ENCODE measurements at regions of chr3 and their contacts with region 1.

Region 1: DNA sequence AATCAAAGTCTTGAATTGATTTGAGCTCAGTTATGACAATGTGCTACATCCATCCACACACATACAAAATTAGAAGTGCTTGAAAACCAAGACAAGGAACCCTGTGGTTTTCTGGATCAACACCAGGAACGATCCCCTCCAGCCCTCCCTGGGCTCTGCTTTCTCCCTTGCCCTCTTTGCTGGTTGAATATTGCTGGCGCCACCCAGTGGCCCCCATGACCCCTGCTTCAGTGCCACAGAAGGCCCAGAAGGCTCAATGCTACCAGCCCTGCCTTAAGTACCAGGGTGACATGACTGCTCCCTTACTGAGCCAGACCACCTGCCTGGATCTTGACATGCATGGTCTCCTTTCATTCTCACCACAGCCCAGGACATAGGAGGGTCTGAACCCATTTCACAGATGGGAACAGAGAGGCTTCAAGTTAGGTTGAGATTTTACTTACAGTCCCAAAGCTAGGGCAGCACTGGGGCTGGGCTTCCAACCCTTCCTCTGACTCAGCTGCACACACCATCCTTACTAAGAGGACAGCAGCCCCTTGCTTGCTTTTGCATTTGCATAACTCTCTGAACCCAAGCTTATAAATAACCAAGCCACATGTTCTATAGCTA is 15.0 kb downstream of the IL12A start:
- DNase-seq: no peak
- H3K4me3 ChIP-seq: no peak overlapping the region
- H3K27ac ChIP-seq: no peak overlapping the region
- H3K27me3 ChIP-seq: no peaks in the 10 kb centered on the region
- CTCF ChIP-seq: peak; percentile 41

Region 2: DNA sequence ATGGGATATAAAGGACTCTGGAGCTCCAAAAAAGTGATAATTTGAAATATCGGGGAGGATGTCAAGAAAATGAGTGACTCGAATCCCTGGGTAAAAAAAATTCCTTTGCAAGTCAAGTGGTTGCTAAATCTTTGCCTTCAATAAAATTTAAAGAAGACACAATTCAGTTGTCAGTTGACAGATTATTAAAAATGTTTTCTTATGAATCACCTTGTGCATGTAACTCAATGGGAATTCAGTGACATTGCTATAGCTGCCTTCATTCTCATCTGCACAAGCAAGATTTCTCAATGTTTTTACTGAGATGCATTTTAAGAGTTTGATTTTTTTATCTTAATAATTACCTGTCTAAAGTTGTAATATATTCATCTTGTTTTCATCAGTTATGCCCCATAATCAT is 279.0 kb before region 1 on chr3:
- CTCF ChIA-PET with region 1: no interaction called
- POLR2A ChIA-PET with region 1: no interaction called
- DNase-seq: no peak
- H3K4me3 ChIP-seq: no peak overlapping the region
- H3K27ac ChIP-seq: no peak overlapping the region
- H3K27me3 ChIP-seq: no peaks in the 10 kb centered on the region
- CTCF ChIP-seq: no peak

Region 3: GRCh38 chr3:159804726-159805410 is 198.8 kb before region 1 on chr3:
- CTCF ChIA-PET with region 1: interaction called, 22 read pairs
- POLR2A ChIA-PET with region 1: no interaction called
- DNase-seq: peak; percentile 74
- H3K4me3 ChIP-seq: no peak overlapping the region
- H3K27ac ChIP-seq: no peak overlapping the region
- H3K27me3 ChIP-seq: no peaks in the 10 kb centered on the region
- CTCF ChIP-seq: peak; percentile 99

Region 4: DNA sequence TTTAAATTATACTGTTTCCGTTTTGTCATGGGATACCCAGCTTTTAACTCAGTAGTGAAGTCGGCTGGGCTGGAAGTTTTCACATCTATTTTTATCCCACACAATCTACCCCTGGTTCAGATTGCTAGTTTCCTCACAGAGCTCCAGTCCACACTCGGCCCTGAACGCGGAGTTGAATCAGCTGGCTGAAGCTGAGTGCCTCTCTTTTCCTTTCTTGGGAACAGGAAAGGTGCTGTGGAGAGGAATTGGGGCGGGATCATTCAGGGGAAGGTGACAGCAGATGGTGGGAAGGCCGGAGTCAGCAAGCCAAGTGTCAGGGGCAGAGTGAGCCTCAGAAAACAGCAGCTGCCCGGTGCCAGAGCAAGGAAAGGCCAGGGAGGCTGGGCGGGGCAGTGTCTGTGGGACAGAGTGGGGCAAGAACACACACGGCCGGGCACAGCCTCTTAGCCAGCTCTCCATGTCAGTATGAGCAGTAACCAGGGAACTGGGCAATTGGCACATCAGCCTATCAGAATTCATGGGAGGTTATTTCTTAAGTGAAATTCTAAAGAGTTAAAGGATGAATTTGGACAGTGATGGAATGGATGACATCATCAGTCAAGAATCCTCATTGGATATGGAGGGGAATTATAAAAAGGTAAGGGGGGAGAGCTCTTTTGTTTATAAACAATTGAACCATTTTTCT is 150.7 kb before region 1 on chr3:
- CTCF ChIA-PET with region 1: interaction called, 14 read pairs
- POLR2A ChIA-PET with region 1: no interaction called
- DNase-seq: no peak
- H3K4me3 ChIP-seq: peak overlapping the region; percentile 44
- H3K27ac ChIP-seq: peak overlapping the region; percentile 94
- H3K27me3 ChIP-seq: no peaks in the 10 kb centered on the region
- CTCF ChIP-seq: no peak

Region 5: GRCh38 chr3:159879598-159879997 is 124.0 kb before region 1 on chr3:
- CTCF ChIA-PET with region 1: interaction called, 685 read pairs
- POLR2A ChIA-PET with region 1: no interaction called
- DNase-seq: no peak
- H3K4me3 ChIP-seq: no peak overlapping the region
- H3K27ac ChIP-seq: no peak overlapping the region
- H3K27me3 ChIP-seq: no peaks in the 10 kb centered on the region
- CTCF ChIP-seq: no peak

Region 6: DNA sequence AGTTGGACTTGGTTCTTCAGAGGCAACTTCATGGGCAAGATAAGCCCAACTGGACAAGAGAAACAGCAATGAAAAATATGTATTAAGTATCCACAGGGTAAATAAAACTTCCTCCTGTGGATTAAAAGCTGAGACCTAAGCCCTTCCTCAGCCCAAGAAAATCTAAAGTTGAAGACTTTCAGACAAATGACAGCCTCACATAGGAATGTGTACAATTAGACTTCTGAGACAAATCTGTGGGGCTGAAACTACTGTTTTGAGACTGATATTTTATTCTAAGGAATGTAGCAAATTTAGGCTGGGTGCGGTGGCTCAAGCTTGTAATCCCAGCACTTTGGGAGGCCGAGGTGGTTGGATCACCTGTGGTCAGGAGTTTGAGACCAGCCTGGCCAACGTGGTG is 89.2 kb before region 1 on chr3:
- CTCF ChIA-PET with region 1: interaction called, 17 read pairs
- POLR2A ChIA-PET with region 1: no interaction called
- DNase-seq: no peak
- H3K4me3 ChIP-seq: no peak overlapping the region
- H3K27ac ChIP-seq: no peak overlapping the region
- H3K27me3 ChIP-seq: no peaks in the 10 kb centered on the region
- CTCF ChIP-seq: no peak

Region 7: GRCh38 chr3:159964166-159964973 is 39.3 kb before region 1 on chr3:
- CTCF ChIA-PET with region 1: interaction called, 10 read pairs
- POLR2A ChIA-PET with region 1: no interaction called
- DNase-seq: peak; percentile 49
- H3K4me3 ChIP-seq: no peak overlapping the region
- H3K27ac ChIP-seq: peak overlapping the region; percentile 75
- H3K27me3 ChIP-seq: no peaks in the 10 kb centered on the region
- CTCF ChIP-seq: no peak